Left lung (tissue), 14 donors: ENCODE measurements at regions of chr17 and their contacts with region 1.

Region 1: GRCh38 chr17:61412143-61412859 is 12.7 kb downstream of the TBX2 start:
- DNase-seq: peak; percentile 82 to 95 (median 92)
- ATAC-seq: peak; percentile 83
- H3K4me3 ChIP-seq: peak overlapping the region; percentile 59 to 65
- H3K27ac ChIP-seq: peak overlapping the region; percentile 87 to 95
- H3K4me1 ChIP-seq: peaks cover 14 to 81% of the 10 kb centered on the region in 2 donors
- H3K27me3 ChIP-seq: peaks cover 14 to 83% of the 10 kb centered on the region in 2 donors
- CTCF ChIP-seq: peak; percentile 99

Region 2: DNA sequence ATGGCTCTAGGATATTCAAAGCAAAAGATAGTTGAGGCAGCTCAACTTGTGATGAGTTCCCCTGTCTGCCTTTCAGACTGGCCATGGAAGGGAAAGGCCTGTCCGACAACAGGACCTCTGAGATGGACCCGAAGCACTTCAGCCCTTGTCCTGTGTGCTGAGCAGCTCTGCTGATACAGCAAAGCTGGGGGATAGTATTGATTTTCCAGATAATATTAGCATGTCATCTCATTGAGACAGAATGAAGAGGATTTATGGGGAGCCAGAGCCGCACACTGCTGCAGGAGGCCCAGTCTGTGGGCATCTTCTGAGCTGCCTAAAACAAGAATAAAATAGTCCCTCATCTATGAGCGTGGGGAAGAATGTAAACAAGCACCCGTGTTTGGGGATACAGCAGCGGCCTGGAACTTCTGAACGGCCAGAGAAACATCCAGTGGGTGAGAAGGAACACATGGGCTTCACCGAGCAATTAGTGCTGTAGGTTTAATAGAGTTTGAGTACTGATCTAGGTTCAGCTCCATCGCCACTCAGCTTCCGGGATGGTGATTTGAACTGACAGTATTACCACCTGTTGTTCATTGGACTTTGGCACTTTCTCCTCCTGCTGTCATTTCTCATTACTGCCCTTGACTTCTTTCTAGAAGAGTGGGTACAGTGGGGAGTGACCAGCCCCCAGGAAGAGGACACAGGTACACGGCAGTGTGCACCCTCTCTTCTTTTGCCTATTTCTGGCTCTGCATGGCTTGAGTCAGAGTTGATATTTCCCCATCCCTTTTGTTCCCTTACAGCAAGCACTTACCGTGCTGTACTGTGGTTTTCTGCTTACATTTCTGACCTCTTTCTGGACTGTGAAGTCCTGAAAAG is 109.1 kb before region 1 on chr17:
- intact Hi-C with region 1: no loop called
- DNase-seq: no peak
- ATAC-seq: no peak
- H3K4me3 ChIP-seq: no peak overlapping the region
- H3K27ac ChIP-seq: no peak overlapping the region
- H3K4me1 ChIP-seq: no peaks in the 10 kb centered on the region
- H3K27me3 ChIP-seq: no peaks in the 10 kb centered on the region
- CTCF ChIP-seq: no peak

Region 3: DNA sequence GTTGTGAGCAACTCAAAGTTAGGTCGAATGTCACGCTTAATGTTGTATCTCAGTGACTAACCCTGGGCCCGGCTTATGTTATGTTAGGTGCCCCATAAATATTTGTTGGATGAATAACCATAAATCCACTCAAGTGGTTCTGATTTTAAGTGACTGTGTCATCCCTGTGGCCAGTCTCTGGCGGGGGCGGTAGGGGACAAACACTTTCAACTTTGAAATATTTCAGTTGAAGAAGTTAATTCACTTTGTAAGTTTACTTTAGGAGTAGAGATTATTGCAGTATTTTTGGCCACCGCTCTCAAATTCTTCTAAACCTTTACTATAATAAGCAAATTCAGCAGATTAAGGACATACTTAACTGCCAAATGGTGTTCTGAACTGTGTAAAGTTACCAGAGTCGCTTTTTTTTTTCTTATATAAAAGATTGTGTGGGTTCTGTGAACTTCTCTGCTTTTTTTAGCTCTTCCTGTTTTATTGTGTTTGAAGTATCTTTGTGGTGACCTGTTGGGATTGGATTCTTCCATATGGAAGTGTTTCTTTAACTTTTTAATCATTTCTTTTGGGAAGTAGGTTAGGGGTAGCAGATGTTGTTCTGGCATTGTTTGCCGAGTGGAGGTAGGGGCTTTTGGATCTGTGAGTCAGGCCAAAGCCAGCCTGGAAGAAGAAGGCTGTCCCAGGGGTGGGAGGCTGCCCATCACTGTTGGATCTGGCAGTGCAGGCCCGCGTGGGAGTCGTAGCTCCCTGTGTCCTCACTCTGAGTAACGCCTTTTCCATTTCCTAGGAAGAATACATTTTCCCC is 74.1 kb before region 1 on chr17:
- intact Hi-C with region 1: no loop called
- DNase-seq: peak in 1 of 4 donors; percentile 51
- ATAC-seq: peak; percentile 36
- H3K4me3 ChIP-seq: no peak overlapping the region
- H3K27ac ChIP-seq: peak overlapping the region; percentile 30 to 52
- H3K4me1 ChIP-seq: peaks cover 6 to 35% of the 10 kb centered on the region in 2 donors
- H3K27me3 ChIP-seq: no peaks in the 10 kb centered on the region
- CTCF ChIP-seq: no peak

Region 4: DNA sequence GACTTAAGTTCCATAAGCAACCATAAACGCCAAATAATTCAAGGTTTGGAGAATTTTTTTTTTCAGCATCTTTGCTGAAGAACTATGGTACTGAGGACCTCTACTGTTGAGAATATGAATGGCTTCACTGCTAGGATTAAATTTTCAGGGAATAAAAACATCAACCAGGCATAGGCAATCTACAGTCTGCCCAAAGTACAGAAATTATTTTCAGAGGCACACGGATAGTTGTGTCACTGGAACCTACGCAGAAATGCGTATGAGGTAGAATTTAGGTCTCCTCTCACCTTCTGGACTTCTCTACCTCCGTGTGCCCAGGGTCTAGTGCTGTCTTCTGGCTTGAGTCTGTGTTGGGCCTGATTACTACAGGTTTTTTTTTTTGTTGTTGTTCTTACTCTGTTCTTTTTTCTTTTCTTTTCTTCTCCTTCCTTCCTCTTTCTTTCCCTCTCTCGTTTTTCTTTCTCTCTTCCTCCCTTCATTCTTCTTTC is 139.0 kb after region 1 on chr17:
- intact Hi-C with region 1: loop called in 1 of 2 experiments (anchors 5 kb)
- DNase-seq: peak in 2 of 4 donors; percentile 53 to 68
- ATAC-seq: peak; percentile 70
- H3K4me3 ChIP-seq: no peak overlapping the region
- H3K27ac ChIP-seq: no peak overlapping the region
- H3K4me1 ChIP-seq: no peaks in the 10 kb centered on the region
- H3K27me3 ChIP-seq: peaks cover 0 to 46% of the 10 kb centered on the region in 2 donors
- CTCF ChIP-seq: peak; percentile 44 to 50

Region 5: DNA sequence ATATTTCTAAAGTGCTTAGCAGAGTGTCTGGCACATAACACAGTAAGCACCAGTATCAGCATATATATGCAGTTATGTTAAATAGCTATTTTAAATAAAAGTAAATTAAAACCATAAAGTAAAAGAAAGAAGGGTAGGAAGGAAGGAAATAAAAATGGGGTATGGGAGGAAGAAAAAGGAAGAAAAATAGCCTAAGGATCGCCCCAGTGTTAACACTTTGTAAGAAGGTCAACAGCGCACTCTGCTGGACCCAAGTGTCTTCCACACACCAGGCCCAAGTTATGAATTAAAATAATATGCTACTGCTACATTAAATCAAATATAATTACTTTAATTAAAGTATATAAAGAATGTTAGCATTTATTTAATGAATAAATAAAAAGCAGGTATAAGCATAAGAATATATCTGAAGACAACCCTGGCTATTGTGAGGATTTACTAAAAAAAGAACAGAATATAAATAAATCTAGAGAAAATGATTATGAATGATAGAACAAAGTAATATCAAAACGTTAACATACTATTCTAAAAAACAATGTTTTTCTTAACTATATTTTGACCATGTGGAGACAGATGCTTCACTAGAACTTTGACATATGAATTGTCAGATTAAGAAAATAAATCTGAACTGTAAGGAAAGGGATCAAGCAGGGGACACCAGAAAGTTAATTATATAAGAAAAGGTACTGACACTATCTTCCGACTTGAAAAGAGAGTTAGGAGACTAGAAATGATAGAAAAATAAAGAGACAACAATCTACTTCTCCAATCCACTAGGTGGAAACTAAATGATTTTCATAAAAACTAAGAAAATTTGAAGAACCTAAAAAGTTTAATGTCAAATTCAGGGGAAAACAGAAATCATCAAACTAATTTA is 425.1 kb after region 1 on chr17:
- intact Hi-C with region 1: loop called in 1 of 2 experiments (anchors 10 kb)
- DNase-seq: peak in 3 of 4 donors; percentile 52 to 86 (median 69)
- ATAC-seq: peak; percentile 93
- H3K4me3 ChIP-seq: no peak overlapping the region
- H3K27ac ChIP-seq: no peak overlapping the region
- H3K4me1 ChIP-seq: no peaks in the 10 kb centered on the region
- H3K27me3 ChIP-seq: no peaks in the 10 kb centered on the region
- CTCF ChIP-seq: peak; percentile 73 to 76